Breast epithelium (tissue), 4 donors: ENCODE measurements at regions of chr19 and their contacts with region 1.

Region 1: GRCh38 chr19:41089955-41090354 is 1.7 kb downstream of the CYP2A13 start:
- DNase-seq: no peak
- H3K4me3 ChIP-seq: no peak overlapping the region
- H3K27ac ChIP-seq: no peak overlapping the region
- H3K4me1 ChIP-seq: no peaks in the 10 kb centered on the region
- H3K27me3 ChIP-seq: peaks cover 0 to 40% of the 10 kb centered on the region in 2 donors
- CTCF ChIP-seq: no peak
- POLR2A ChIP-seq: no peak

Region 2: GRCh38 chr19:41959056-41960053 is 869.4 kb after region 1 on chr19 and contains the start of gene RABAC1:
- intact Hi-C with region 1: loop called (anchors 5 kb)
- DNase-seq: peak; percentile 83 to 84
- H3K4me3 ChIP-seq: peak within 1 kb of the TSS; percentile 67 to 99 (median 78)
- H3K27ac ChIP-seq: peak within 1 kb of the TSS; percentile 89 to 95
- H3K4me1 ChIP-seq: peaks cover 0 to 11% of the 10 kb centered on the region in 2 donors
- H3K27me3 ChIP-seq: no peaks in the 10 kb centered on the region
- CTCF ChIP-seq: no peak
- POLR2A ChIP-seq: peak; percentile 32
- total RNA-seq, gene RABAC1: 150 to 190 (median 153) TPM